Panc1 (cell line): ENCODE measurements at regions of chr12 and their contacts with region 1.

Region 1: DNA sequence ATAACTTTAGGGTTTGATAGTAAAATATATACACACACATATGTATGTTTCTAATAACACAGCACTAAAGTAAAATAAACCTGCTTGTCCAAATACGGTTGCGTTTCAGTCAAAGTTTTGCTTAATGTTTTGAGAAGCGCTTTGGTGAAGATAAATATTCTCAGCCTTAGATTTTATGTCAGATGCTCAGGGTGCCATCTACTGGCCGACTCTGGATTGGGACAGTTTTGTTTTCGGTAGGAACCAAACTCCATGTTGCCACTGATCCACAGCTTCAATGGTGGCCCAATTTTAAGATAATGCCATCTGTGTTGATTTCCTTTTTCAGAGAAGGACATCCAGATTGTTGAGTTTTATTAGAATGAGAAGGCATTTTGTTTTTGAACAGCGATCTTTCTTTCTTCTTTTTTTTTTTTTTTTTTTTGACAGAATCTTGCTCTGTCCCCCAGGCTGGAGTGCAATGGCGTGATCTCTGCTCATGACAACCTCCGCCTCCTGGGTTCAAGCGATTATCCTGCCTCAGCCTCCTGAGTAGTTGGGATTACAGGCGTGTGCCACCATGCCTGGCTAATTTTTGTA is 43.1 kb downstream of the LLPH start:
- DNase-seq: peak; percentile 57
- ATAC-seq: peak; percentile 91
- H3K4me3 ChIP-seq: no peak overlapping the region
- H3K27ac ChIP-seq: peak overlapping the region; percentile 69; the same call in 1 of the 2 replicates
- H3K4me1 ChIP-seq: peaks cover 10% of the 10 kb centered on the region; the same call in 1 of the 2 replicates
- H3K27me3 ChIP-seq: no peaks in the 10 kb centered on the region
- CTCF ChIP-seq: peak; percentile 88

Region 2: DNA sequence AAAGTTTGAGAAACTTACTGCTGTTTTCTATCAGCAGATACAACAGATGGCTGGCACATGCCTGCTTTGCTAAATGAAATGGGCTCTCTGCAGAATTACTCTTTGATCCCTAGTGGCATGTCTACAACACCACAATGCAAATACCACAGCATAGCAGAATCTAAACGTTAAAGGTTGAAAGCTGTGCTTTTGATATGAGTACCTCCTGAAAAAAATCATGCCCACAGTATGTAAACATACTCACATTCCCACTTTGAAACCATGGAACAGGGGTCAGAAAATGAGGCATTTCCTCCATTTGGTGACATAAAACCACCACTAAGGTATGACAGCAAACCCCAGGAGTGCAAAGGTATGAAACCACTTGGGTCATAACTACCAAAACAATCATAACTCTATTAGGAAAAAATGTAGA is 973.8 kb before region 1 on chr12:
- CTCF ChIA-PET with region 1: no interaction called
- POLR2A ChIA-PET with region 1: no interaction called
- in situ Hi-C with region 1: no loop called
- intact Hi-C with region 1: no loop called
- DNase-seq: no peak
- ATAC-seq: no peak
- H3K4me3 ChIP-seq: no peak overlapping the region
- H3K27ac ChIP-seq: no peak overlapping the region
- H3K4me1 ChIP-seq: no peaks in the 10 kb centered on the region
- H3K27me3 ChIP-seq: peaks cover 28% of the 10 kb centered on the region
- CTCF ChIP-seq: no peak

Region 3: DNA sequence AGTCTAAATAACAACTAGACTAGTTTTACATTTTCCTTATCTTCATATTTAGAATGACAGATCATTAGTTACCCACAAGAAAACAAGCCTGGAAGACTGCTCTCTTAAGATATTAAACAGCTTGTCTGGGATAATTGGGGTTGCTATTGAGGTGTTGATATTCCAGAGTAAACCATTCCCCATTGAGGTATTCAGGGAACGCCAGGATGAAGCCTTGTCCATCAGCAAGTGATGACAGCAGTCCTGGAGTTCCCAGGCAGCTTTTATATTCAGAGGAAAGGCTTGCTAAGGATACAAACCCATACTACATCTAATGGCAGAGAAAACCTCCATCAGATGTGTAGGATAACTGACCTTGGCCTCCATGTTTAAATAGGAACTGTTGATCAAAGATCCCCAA is 640.6 kb before region 1 on chr12:
- CTCF ChIA-PET with region 1: interaction called, 13 read pairs
- POLR2A ChIA-PET with region 1: no interaction called
- in situ Hi-C with region 1: no loop called
- intact Hi-C with region 1: no loop called
- DNase-seq: no peak
- ATAC-seq: no peak
- H3K4me3 ChIP-seq: no peak overlapping the region
- H3K27ac ChIP-seq: no peak overlapping the region
- H3K4me1 ChIP-seq: no peaks in the 10 kb centered on the region; the same call in 1 of the 2 replicates
- H3K27me3 ChIP-seq: no peaks in the 10 kb centered on the region
- CTCF ChIP-seq: no peak

Region 4: DNA sequence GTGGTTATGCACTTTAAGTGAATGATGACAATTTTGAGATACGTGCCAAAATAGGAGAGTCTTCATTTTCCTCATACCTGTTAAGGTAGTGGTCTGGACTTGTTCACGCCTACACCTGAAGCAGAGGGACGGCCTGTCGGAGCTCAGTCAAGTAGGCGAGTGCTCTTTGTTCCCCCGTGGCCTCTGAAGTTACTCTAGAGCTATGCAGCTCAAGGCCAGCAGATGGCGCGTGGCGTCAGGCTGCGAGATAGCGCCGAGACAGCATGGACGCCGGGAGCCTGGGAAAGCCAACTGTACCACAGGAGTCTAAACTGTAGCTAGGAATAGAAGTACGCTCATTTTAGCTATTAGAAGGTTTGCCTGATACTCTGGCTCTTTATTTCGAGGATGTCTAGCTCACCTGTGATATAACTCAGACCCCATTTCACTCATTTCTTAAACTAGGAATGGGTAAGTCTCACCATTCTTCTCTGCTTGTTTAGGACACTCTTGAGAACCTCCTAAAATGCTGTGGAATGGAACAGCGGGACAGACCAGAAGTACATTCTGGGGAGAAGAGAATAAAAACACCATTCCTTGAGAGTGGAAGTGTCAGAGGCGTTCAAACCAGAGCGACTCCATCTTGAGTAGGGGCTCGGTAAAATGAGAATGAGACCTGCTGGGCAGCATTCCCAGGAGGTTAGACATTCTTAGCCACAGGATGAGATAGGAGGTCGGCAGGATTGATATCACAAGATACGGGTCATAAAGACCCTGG is 530.6 kb before region 1 on chr12:
- CTCF ChIA-PET with region 1: no interaction called
- POLR2A ChIA-PET with region 1: interaction called, 5 read pairs
- in situ Hi-C with region 1: no loop called
- intact Hi-C with region 1: loop called (anchors 5 kb)
- DNase-seq: no peak
- ATAC-seq: peak; percentile 100
- H3K4me3 ChIP-seq: no peak overlapping the region
- H3K27ac ChIP-seq: peak overlapping the region; percentile 78
- H3K4me1 ChIP-seq: no peaks in the 10 kb centered on the region; the same call in 1 of the 2 replicates
- H3K27me3 ChIP-seq: no peaks in the 10 kb centered on the region
- CTCF ChIP-seq: peak; percentile 96

Region 5: GRCh38 chr12:65891987-65892481 is 195.4 kb before region 1 on chr12:
- CTCF ChIA-PET with region 1: no interaction called
- POLR2A ChIA-PET with region 1: no interaction called
- in situ Hi-C with region 1: no loop called
- intact Hi-C with region 1: loop called (anchors 5 kb)
- DNase-seq: peak; percentile 95
- ATAC-seq: peak; percentile 83
- H3K4me3 ChIP-seq: peak overlapping the region; percentile 1 to 46; a peak in 3 of 4 replicates
- H3K27ac ChIP-seq: peak overlapping the region; percentile 100
- H3K4me1 ChIP-seq: peaks cover 88% of the 10 kb centered on the region
- H3K27me3 ChIP-seq: no peaks in the 10 kb centered on the region
- CTCF ChIP-seq: no peak

Region 6: GRCh38 chr12:66235626-66236281 is 148.3 kb after region 1 on chr12:
- CTCF ChIA-PET with region 1: no interaction called
- POLR2A ChIA-PET with region 1: no interaction called
- in situ Hi-C with region 1: no loop called
- intact Hi-C with region 1: no loop called
- DNase-seq: no peak
- ATAC-seq: no peak
- H3K4me3 ChIP-seq: peak overlapping the region; percentile 53 to 55
- H3K27ac ChIP-seq: no peak overlapping the region
- H3K4me1 ChIP-seq: no peaks in the 10 kb centered on the region; the same call in 1 of the 2 replicates
- H3K27me3 ChIP-seq: peaks cover 3% of the 10 kb centered on the region
- CTCF ChIP-seq: 0 out of 2 replicates have a peak, but pooled peaks have one; percentile 18